ENCODE measurements at regions of chr1 and their contacts with region 1.

Region 1: GRCh38 chr1:85048296-85049064 is at the start of gene MCOLN3:
- DNase-seq: peak; percentile 54
- H3K4me3 Mint-ChIP-seq: peak within 1 kb of the TSS; percentile 64
- H3K27ac Mint-ChIP-seq: no peak within 1 kb of the TSS
- H3K4me1 Mint-ChIP-seq: peaks cover 17% of the 10 kb centered on the region
- H3K27me3 Mint-ChIP-seq: peaks cover 39% of the 10 kb centered on the region
- total RNA-seq, gene MCOLN3: 0.22 to 0.62 TPM

Region 2: DNA sequence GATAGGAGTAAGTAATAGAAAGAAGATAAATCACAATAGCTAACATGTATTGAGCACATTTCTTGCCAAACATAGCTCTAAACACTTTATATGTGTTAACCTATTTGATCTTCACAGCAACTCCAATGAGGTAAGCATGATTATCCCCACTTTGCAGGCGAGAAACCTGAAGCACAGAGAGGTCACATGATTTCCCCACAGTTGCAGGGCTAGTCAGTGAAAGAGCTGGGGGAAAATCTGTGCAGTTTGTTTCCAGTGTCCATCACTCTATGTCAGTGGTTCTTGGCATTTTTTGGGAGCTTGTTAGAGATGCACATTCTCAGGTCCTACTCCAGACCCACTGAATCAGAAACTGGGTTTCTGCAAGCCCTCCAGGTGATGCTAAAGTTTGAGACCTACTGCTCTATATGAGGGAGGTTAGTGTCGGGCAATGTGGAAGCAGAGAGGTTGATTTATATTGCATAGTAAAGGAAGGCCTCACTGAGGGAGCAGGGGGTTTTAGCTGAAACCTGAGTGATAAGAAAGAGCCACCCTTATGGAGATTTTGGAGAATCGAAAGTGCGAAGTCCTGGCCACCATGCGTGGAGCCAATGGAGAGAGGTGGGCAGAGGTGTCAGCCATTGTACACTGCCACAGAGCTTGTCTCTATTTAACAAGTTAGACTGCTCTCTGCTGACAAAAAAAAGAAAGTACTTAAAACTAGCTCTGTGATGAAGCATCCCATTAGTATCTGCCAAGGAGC is 21.1 kb before region 1 on chr1:
- CTCF ChIA-PET with region 1: no interaction called
- POLR2A ChIA-PET with region 1: no interaction called
- intact Hi-C with region 1: no loop called
- DNase-seq: peak; percentile 25
- H3K4me3 Mint-ChIP-seq: no peak overlapping the region
- H3K27ac Mint-ChIP-seq: no peak overlapping the region
- H3K4me1 Mint-ChIP-seq: peaks cover 12% of the 10 kb centered on the region
- H3K27me3 Mint-ChIP-seq: no peaks in the 10 kb centered on the region

Region 3: GRCh38 chr1:85230305-85230980 is 182.0 kb after region 1 on chr1:
- CTCF ChIA-PET with region 1: interaction called, 3 read pairs
- POLR2A ChIA-PET with region 1: no interaction called
- intact Hi-C with region 1: loop called (anchors 10 kb)
- DNase-seq: no peak
- H3K4me3 Mint-ChIP-seq: no peak overlapping the region
- H3K27ac Mint-ChIP-seq: no peak overlapping the region
- H3K4me1 Mint-ChIP-seq: no peaks in the 10 kb centered on the region
- H3K27me3 Mint-ChIP-seq: peaks cover 2% of the 10 kb centered on the region